ENCODE measurements at regions of chr14 and their contacts with region 1.

Region 1: GRCh38 chr14:90795746-90796145 is 20.5 kb downstream of the TTC7B start:
- DNase-seq: peak; percentile 70
- H3K4me3 ChIP-seq: 0 out of 4 replicates have a peak overlapping the region, but pooled peaks of 1 of the 2 experiments have one; percentile 3
- H3K27ac ChIP-seq: peak overlapping the region; percentile 79
- H3K4me1 ChIP-seq: peaks cover 15 to 25% of the 10 kb centered on the region in 2 experiments
- H3K27me3 ChIP-seq: no peaks in the 10 kb centered on the region
- CTCF ChIP-seq: no peak
- EP300 ChIP-seq: no peak
- RAD21 ChIP-seq: no peak

Region 2: GRCh38 chr14:90785471-90785870 is 10.3 kb before region 1 on chr14:
- CTCF ChIA-PET with region 1: interaction called, 15 read pairs
- POLR2A ChIA-PET with region 1: no interaction called
- DNase-seq: no peak
- H3K4me3 ChIP-seq: no peak overlapping the region
- H3K27ac ChIP-seq: no peak overlapping the region
- H3K4me1 ChIP-seq: peaks cover 0 to 2% of the 10 kb centered on the region in 2 experiments; a peak in 1 of 4 replicates
- H3K27me3 ChIP-seq: no peaks in the 10 kb centered on the region
- CTCF ChIP-seq: peak; percentile 42
- EP300 ChIP-seq: no peak
- RAD21 ChIP-seq: no peak

Region 3: GRCh38 chr14:90815822-90816700 is 20.3 kb after region 1 on chr14 and contains the start of gene TTC7B:
- CTCF ChIA-PET with region 1: interaction called, 10 read pairs
- POLR2A ChIA-PET with region 1: no interaction called
- DNase-seq: peak; percentile 99
- H3K4me3 ChIP-seq: peak within 1 kb of the TSS; percentile 71 to 89
- H3K27ac ChIP-seq: peak within 1 kb of the TSS in 1 of 2 experiments; percentile 68; a peak in 1 of 4 replicates
- H3K4me1 ChIP-seq: peaks cover 10 to 14% of the 10 kb centered on the region in 2 experiments; a peak in 3 of 4 replicates
- H3K27me3 ChIP-seq: no peaks in the 10 kb centered on the region
- CTCF ChIP-seq: peak; percentile 17; the same call in 1 of the 2 replicates
- EP300 ChIP-seq: no peak
- RAD21 ChIP-seq: no peak
- polyA plus RNA-seq, gene TTC7B: 42.5 and 43.1 TPM in 2 replicates